OCI-LY7 (cell line): ENCODE measurements at regions of chr13 and their contacts with region 1.

Region 1: DNA sequence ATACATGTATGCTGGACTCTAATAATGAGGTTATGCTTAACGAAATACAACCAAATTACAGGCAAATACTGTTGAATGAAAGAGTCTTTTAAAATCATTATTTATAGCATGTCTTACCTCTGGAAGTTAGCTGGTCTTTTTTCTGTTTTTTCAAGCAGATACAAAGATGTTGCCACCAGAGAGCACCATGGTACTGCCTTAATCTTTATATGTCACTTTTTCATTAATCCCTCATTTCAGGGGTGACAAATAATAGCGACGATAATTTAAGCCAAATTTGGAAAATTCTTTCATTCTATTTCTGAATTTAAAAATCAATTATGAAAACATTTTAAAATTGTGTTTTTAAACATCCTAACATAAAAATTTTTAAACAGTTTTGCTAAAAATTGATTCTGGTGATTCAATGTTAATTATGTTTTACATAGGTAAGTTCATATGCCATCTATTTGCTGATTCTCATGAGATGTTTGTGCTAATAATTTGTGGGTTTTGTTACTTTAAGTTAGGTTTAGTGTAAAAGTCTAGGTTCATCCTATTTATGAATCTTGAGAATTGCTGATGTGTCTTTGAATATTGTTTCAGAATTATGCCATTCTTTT is 379.3 kb upstream of the SGCG start:
- DNase-seq: peak; percentile 20
- H3K4me3 ChIP-seq: no peak overlapping the region
- H3K27ac ChIP-seq: no peak overlapping the region
- H3K4me1 ChIP-seq: no peaks in the 10 kb centered on the region
- CTCF ChIP-seq: peak; percentile 66

Region 2: DNA sequence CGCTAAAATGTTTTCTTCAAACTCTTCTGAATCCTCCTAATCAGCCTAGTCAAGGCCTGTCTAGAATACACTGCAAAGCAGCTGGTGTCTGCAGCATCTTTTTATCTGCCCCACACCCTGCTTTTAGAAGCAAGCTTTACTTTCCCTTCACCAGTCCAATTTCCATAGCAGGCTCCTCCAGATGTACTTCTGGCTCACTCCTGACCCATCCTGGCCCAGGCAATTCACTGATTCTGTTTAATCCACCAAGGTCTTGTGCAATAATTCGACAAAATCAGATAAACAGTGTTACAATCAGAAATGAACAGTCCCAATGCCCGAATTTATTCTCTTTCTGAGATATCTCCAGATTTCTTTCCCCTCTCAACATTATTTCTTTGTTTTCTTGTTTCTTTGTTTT is 36.0 kb before region 1 on chr13:
- CTCF ChIA-PET with region 1: no interaction called
- POLR2A ChIA-PET with region 1: no interaction called
- intact Hi-C with region 1: no loop called
- DNase-seq: no peak
- H3K4me3 ChIP-seq: no peak overlapping the region
- H3K27ac ChIP-seq: no peak overlapping the region
- H3K4me1 ChIP-seq: no peaks in the 10 kb centered on the region
- CTCF ChIP-seq: no peak

Region 3: GRCh38 chr13:22777207-22777606 is 24.3 kb before region 1 on chr13:
- CTCF ChIA-PET with region 1: no interaction called
- POLR2A ChIA-PET with region 1: no interaction called
- intact Hi-C with region 1: no loop called
- DNase-seq: no peak
- H3K4me3 ChIP-seq: no peak overlapping the region
- H3K27ac ChIP-seq: no peak overlapping the region
- H3K4me1 ChIP-seq: no peaks in the 10 kb centered on the region
- CTCF ChIP-seq: no peak

Region 4: DNA sequence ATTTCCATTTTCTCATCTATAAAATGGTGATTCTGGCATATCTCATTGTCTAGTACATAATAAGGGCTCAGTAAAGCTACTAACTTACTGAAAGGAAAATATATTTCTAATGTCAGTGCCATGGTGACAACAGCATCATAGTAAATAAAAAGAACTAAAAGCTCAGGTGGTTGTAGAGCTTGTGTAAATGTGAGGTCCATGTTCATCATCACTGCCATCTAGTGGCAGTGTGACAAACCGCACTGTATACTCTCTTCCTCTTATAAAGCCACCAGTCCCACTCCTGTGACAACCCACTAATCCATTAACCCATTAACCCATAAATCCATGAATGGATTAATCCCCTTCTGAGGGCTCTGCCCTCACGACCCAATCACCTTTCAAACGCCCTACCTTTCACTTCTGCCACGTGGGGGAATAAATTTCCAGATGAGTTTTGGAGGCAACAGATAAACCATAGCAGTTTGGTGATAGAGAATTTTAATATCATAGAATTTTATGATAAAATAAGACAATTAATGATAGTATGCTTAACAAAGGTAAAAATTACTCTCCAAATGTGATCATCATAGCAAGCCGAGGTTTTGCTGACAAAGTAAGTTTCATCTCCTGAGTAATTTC is 218.8 kb after region 1 on chr13:
- CTCF ChIA-PET with region 1: interaction called, 3 read pairs
- POLR2A ChIA-PET with region 1: interaction called, 3 read pairs
- intact Hi-C with region 1: loop called (anchors 1 kb)
- DNase-seq: peak; percentile 58
- H3K4me3 ChIP-seq: no peak overlapping the region
- H3K27ac ChIP-seq: no peak overlapping the region
- H3K4me1 ChIP-seq: no peaks in the 10 kb centered on the region
- CTCF ChIP-seq: peak; percentile 90